ENCODE measurements at regions of chr9 and their contacts with region 1.

Region 1: DNA sequence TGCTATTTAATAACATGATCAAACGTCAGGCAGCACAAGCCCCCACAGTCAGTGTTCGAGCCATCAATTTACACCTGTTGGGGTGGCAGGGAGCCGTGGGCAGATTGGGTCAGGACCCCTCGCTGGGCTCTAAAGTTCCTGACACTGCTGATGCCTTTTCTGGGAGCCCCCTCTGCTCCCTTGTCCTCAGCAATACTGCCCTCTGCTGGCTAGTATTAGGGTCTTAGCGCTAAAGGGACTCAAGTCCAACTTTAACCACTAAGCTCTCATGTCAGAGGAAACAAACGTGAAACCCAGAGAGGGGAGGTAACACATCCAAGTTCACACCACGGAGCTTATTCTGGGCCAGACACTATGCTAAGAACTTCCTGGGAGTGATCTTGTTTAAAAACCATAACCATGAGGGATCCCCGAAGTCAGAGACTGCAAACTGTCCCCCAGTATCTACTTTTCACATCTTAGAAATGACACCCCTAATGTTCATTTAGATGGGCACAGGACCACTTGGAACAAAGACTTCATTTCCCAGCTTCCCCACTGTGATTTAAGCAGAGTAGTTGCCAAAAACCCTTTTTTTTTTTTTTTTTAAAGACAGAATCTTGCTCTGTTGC is 20.4 kb downstream of the ANKS6 start:
- DNase-seq: no peak
- ATAC-seq: no peak

Region 2: GRCh38 chr9:98315551-98316060 is 460.3 kb before region 1 on chr9:
- intact Hi-C with region 1: loop called (anchors 10 kb)
- DNase-seq: peak; percentile 88
- ATAC-seq: peak; percentile 93